Thyroid gland (tissue), 4 donors: ENCODE measurements at regions of chr12 and their contacts with region 1.

Region 1: DNA sequence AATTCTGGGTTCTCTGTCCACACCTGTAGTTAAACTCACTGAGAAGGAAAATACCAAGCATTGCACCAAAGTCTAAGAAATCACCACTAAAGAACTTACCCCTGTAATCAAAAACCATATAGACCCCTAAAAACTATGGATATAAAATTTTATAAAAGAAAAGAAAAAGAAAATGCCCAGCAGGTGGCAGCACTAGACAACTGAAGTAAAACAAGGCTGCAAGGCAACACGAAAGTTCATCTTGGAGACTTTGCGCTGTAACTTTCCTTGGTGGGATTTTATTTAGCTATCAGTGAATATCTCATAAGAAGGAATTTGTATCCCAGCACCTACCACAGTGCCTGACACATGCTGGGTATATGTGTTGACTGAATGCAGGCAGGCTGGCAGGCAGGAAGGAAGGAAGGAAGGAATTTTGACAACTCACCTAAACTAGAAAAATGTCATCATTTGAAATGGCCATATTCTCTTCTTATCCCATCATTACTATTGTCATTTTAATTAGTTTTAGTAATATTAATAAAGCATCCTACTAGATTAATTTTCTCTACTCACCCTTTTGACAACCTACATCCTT is 68.2 kb upstream of the ETV6 start:
- DNase-seq: peak; percentile 66 to 72
- H3K4me3 ChIP-seq: no peak overlapping the region
- H3K27ac ChIP-seq: peak overlapping the region in 1 of 3 donors; percentile 45
- H3K4me1 ChIP-seq: peaks cover 10 to 15% of the 10 kb centered on the region in 2 donors
- H3K27me3 ChIP-seq: no peaks in the 10 kb centered on the region
- CTCF ChIP-seq: peak; percentile 56 to 76 (median 60)
- POLR2A ChIP-seq: no peak

Region 2: DNA sequence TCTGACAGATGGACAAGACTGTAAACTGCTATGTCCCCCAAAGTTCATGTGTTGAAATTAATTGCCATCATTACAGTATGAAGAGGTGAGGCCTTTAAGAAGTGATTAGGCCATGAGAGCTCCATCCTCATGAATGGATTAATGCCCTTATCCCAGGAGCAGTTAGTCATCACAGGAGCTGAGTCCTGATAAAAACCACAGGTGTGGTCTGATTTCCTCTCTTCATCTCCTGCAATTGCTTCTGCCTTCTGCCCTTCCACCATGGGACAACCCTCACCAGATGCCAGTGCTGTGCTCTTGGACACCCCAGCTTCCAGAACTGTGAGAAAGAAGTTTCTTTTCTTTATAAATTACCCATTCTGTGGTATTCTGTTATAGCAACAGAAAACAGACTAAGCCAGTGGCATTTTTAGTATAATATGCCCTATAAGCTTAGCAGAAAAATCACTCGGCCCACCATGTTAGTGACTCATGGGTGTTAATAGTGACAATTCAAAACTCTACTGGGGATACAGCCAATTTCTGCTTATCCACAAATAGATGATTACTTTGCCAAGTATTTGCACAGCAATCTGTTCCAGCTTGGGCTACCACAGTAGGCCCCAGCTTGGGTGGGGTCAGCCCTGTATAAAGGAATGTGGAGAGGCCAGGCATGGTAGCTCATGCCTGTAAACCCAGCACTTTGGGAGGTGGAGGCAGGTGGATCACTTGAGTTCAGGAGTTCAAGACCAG is 360.5 kb after region 1 on chr12:
- intact Hi-C with region 1: no loop called
- DNase-seq: peak in 1 of 2 donors; percentile 16
- H3K4me3 ChIP-seq: no peak overlapping the region
- H3K27ac ChIP-seq: no peak overlapping the region
- H3K4me1 ChIP-seq: no peaks in the 10 kb centered on the region
- H3K27me3 ChIP-seq: no peaks in the 10 kb centered on the region
- CTCF ChIP-seq: no peak
- POLR2A ChIP-seq: no peak

Region 3: GRCh38 chr12:12033589-12034223 is 452.4 kb after region 1 on chr12:
- intact Hi-C with region 1: loop called (anchors 2 kb)
- DNase-seq: no peak
- H3K4me3 ChIP-seq: no peak overlapping the region
- H3K27ac ChIP-seq: no peak overlapping the region
- H3K4me1 ChIP-seq: peaks cover 8 to 10% of the 10 kb centered on the region in 2 donors
- H3K27me3 ChIP-seq: no peaks in the 10 kb centered on the region
- CTCF ChIP-seq: no peak
- POLR2A ChIP-seq: no peak

Region 4: DNA sequence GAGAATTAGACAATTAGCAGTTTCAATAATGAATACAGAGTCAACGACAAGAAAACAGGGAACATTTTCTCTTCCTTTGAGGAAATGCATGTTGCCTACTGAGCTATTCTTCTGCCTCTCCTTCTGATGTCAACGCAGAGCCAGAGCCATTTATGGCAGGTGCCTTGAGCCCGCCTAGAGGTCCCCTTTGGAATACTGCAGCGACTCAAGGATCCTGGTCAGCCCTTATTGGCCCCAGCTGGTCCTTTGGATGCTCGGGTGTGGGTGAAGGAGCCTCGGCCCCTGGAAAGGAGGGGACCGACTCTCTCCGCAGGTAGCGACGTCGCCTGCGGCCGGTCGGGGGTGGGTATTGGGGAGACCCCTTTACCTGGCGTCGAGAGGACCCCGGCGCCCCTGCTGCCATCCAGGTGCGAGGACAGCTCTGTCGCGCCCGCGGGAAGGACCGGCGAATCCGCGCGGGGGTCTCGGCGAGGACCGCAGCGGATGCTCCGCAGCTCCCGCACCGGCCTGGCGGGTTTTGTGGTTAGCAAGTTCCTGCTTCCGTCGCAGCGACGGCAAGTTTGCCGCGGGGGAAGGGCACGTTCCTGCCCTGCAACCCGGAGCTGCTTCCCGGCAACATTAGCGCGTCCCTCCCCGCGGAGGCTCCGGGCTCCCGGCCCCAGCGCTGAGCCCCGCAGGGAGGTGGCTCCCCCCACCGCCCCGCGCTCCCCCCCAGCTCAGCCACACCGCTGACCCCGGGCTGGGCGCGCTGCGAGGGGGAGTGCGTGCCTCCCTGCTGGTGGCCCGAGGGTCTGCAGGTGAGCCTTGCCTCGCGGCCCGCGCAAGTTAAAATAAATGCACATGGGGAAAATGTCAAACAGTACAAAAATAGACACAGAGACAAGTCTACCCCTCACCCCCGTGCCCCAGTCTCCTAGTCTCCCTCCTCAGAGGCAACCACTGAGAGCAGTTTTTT is 768.7 kb after region 1 on chr12 and contains the start of gene MANSC1:
- intact Hi-C with region 1: no loop called
- DNase-seq: peak; percentile 63 to 74
- H3K4me3 ChIP-seq: peak within 1 kb of the TSS; percentile 42 to 84 (median 72)
- H3K27ac ChIP-seq: peak within 1 kb of the TSS; percentile 33 to 81 (median 70)
- H3K4me1 ChIP-seq: peaks cover 0 to 8% of the 10 kb centered on the region in 2 donors
- H3K27me3 ChIP-seq: no peaks in the 10 kb centered on the region
- CTCF ChIP-seq: peak; percentile 17 to 43 (median 33)
- POLR2A ChIP-seq: peak in 1 of 2 donors; percentile 64
- total RNA-seq, gene MANSC1: 15.3 to 59.0 (median 37.5) TPM